Prostate gland (tissue), 2 donors: ENCODE measurements at regions of chr13 and their contacts with region 1.

Region 1: DNA sequence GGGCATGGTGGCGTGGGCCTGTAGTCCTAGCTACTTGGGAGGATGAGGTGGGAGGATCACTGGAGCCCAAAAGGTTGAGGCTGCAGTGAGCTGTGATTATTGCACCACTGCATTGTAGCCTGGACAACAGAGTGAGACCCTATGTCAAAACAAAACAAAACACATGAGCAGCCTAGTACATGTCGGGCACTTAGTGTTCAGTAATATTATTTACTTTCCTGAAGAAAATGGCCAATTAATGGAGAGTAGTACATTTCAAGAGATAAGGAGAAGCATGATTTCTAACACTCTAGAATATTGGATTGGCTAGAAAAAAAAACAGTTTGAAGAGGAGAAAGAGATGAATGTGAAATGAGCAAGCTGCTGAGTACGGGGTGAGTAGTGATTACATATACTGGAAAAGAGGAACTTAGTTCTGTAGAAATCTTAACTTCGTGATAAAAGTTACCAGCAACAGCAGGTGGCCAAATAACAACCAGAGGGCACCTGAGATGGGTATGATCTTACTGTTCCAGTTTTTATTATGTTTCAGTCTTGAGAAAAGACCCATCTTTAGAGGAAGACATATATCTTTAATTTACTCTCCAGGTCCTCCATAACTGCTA is 36.2 kb downstream of the SPATA13 start:
- DNase-seq: no peak
- H3K4me3 ChIP-seq: no peak overlapping the region
- H3K27ac ChIP-seq: peak overlapping the region; percentile 12 to 78
- H3K4me1 ChIP-seq: peaks cover 10% of the 10 kb centered on the region
- H3K27me3 ChIP-seq: no peaks in the 10 kb centered on the region
- CTCF ChIP-seq: no peak
- POLR2A ChIP-seq: no peak

Region 2: DNA sequence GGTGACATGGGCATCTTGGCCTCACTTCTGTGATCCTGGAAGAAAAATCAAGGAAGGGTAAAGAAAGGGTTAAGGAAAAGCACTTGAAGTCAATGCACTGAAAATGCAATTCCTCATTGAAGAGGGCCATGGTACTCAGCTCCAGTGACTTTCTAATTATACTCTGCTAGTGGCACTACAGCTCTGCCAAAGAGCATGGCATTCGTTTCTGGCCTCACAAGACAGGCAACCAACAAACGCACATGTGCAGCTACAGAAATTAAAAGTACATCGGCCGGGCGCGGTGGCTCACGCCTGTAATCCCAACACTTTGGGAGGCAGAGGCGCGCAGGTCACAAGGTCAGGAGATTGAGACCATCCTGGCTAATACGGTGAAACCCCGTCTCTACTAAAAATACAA is 785.0 kb before region 1 on chr13:
- intact Hi-C with region 1: no loop called
- DNase-seq: no peak
- H3K4me3 ChIP-seq: no peak overlapping the region
- H3K27ac ChIP-seq: no peak overlapping the region
- H3K4me1 ChIP-seq: no peaks in the 10 kb centered on the region
- H3K27me3 ChIP-seq: no peaks in the 10 kb centered on the region
- CTCF ChIP-seq: no peak
- POLR2A ChIP-seq: no peak

Region 3: GRCh38 chr13:24160454-24161009 is 36.2 kb before region 1 on chr13 and contains the start of gene SPATA13:
- intact Hi-C with region 1: loop called (anchors 5 kb)
- DNase-seq: peak; percentile 94
- H3K4me3 ChIP-seq: peak within 1 kb of the TSS; percentile 80 to 86
- H3K27ac ChIP-seq: peak within 1 kb of the TSS; percentile 76 to 86
- H3K4me1 ChIP-seq: no peaks in the 10 kb centered on the region
- H3K27me3 ChIP-seq: no peaks in the 10 kb centered on the region
- CTCF ChIP-seq: peak in 2 of 4 experiments; percentile 6 to 22
- POLR2A ChIP-seq: peak; percentile 74
- total RNA-seq, gene SPATA13: 85.2 to 163 TPM